ENCODE measurements at regions of chrX and their contacts with region 1.

Region 1: DNA sequence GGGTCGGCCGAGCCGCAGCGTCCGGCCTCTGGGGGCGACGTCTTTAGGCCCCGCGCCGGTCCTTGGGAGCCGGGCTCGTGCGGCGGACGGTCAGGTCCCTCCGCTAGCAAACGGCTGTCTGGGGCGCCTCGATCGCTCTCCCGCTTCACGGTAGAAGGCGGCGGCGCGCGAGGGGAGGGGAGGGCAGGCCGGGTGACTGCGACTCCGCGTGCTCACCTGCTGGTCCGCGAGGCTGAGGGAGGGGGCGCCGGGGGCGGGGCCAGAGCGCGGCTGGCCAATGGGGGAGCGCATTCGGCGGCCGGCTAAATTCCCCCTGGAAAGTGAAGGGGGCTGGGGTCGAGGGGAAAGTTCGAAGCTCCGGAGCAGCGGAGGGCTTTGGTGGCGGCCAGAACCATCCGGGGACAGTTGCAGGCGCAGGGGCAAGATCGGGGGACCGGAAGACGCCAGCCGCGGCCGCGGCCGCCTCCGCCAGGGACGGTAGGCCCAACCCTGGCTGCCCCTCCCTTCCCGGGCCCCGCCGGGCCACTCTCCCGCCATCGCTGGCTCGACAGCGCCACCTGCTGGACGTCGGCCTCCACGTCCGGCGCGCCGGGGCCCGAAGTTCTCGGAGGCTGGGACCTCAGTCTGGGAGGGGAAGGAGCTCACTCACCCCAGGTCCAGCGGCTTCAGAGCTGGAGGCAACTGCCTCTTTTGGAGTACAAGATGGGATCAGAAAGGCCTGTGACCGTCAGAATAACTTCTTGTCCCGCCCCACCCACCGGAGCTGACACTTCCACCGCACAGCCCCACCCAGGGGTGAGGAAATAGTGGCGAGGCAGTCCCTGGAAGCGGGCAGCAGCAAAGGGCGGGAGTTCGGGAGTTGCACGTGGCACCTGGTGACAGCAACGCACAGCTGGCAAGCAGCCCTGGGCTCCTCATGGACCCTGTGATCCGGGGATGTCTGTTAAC is 49.9 kb downstream of the ELF4 start:
- DNase-seq: peak; percentile 81
- ATAC-seq: peak; percentile 80
- H3K4me3 Mint-ChIP-seq: peak overlapping the region; percentile 59
- H3K27ac Mint-ChIP-seq: no peak overlapping the region
- H3K4me1 Mint-ChIP-seq: peaks cover 20% of the 10 kb centered on the region
- H3K27me3 Mint-ChIP-seq: peaks cover 41% of the 10 kb centered on the region
- CTCF ChIP-seq: peak; percentile 81

Region 2: GRCh38 chrX:129925305-129926092 is 134.9 kb before region 1 on chrX:
- CTCF ChIA-PET with region 1: interaction called, 23 read pairs
- POLR2A ChIA-PET with region 1: no interaction called
- DNase-seq: peak; percentile 66
- ATAC-seq: peak; percentile 73
- H3K4me3 Mint-ChIP-seq: no peak overlapping the region
- H3K27ac Mint-ChIP-seq: no peak overlapping the region
- H3K4me1 Mint-ChIP-seq: 0 out of 2 replicates have a peak, but pooled peaks cover under 1% of the 10 kb centered on the region
- H3K27me3 Mint-ChIP-seq: no peaks in the 10 kb centered on the region
- CTCF ChIP-seq: peak; percentile 54

Region 3: DNA sequence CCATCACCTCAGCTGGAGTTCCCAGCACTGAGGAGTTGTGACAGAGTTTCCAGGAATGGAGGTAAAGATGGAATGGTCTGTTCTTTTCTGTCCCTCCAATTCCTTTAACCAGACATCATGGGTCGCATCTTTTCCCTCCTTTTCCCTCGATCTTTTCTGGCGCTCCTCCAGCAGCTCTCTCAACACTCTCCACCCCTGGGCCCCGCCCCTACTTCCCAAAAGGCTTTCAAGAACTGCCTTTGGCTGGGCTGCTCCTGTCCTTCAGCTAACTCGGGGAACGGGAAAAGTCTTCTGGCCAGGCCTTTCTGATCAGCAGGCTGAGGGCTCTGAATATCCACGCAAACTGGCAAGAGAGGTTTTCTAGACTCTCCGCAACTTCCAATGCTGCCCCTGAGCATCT is 120.4 kb before region 1 on chrX:
- CTCF ChIA-PET with region 1: interaction called, 10 read pairs
- POLR2A ChIA-PET with region 1: no interaction called
- DNase-seq: no peak
- ATAC-seq: peak; percentile 68
- H3K4me3 Mint-ChIP-seq: no peak overlapping the region; the same call in 1 of the 2 replicates
- H3K27ac Mint-ChIP-seq: no peak overlapping the region
- H3K4me1 Mint-ChIP-seq: peaks cover 25% of the 10 kb centered on the region
- H3K27me3 Mint-ChIP-seq: peaks cover 66% of the 10 kb centered on the region
- CTCF ChIP-seq: no peak

Region 4: GRCh38 chrX:129957241-129958082 is 102.9 kb before region 1 on chrX:
- CTCF ChIA-PET with region 1: interaction called, 16 read pairs
- POLR2A ChIA-PET with region 1: no interaction called
- DNase-seq: peak; percentile 64
- ATAC-seq: peak; percentile 50
- H3K4me3 Mint-ChIP-seq: peak overlapping the region; percentile 66
- H3K27ac Mint-ChIP-seq: no peak overlapping the region
- H3K4me1 Mint-ChIP-seq: peaks cover 45% of the 10 kb centered on the region
- H3K27me3 Mint-ChIP-seq: peaks cover 93% of the 10 kb centered on the region
- CTCF ChIP-seq: no peak

Region 5: GRCh38 chrX:130024127-130024526 is 36.3 kb before region 1 on chrX:
- CTCF ChIA-PET with region 1: interaction called, 20 read pairs
- POLR2A ChIA-PET with region 1: interaction called, 3 read pairs
- DNase-seq: peak; percentile 84
- ATAC-seq: peak; percentile 97
- H3K4me3 Mint-ChIP-seq: peak overlapping the region; percentile 22; the same call in 1 of the 2 replicates
- H3K27ac Mint-ChIP-seq: no peak overlapping the region
- H3K4me1 Mint-ChIP-seq: peaks cover 12% of the 10 kb centered on the region
- H3K27me3 Mint-ChIP-seq: no peaks in the 10 kb centered on the region
- CTCF ChIP-seq: no peak

Region 6: DNA sequence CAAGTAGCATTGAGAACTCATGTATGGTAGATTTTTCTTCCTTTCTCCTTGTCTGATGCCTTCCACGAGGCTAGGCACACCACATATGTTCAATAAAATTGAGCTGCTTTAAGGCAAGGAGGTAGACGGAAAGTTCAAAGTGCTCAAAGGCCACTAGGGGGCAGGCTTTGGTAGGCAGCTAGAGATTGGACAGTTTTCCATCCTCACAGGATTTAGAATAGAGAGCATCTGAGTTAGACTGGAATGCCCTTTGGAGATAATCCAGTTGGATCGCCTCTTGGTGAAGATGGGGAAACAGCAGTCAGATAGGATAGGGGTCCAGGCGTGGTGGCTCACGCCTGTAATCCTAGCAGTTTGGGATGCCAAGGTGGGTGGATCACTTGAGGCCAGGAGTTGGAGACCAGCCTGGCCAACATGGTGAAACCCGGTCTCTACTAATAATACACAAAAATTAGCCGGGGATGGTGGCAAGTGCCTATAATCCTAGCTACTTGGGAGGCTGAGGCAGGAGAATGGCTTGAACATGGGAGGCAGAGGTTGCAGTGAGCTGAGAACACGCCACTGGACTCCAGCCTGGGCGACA is 19.5 kb after region 1 on chrX:
- CTCF ChIA-PET with region 1: interaction called, 14 read pairs
- POLR2A ChIA-PET with region 1: no interaction called
- DNase-seq: peak; percentile 52
- ATAC-seq: peak; percentile 65
- H3K4me3 Mint-ChIP-seq: no peak overlapping the region
- H3K27ac Mint-ChIP-seq: no peak overlapping the region
- H3K4me1 Mint-ChIP-seq: peaks cover 15% of the 10 kb centered on the region
- H3K27me3 Mint-ChIP-seq: no peaks in the 10 kb centered on the region
- CTCF ChIP-seq: peak; percentile 53

Region 7: DNA sequence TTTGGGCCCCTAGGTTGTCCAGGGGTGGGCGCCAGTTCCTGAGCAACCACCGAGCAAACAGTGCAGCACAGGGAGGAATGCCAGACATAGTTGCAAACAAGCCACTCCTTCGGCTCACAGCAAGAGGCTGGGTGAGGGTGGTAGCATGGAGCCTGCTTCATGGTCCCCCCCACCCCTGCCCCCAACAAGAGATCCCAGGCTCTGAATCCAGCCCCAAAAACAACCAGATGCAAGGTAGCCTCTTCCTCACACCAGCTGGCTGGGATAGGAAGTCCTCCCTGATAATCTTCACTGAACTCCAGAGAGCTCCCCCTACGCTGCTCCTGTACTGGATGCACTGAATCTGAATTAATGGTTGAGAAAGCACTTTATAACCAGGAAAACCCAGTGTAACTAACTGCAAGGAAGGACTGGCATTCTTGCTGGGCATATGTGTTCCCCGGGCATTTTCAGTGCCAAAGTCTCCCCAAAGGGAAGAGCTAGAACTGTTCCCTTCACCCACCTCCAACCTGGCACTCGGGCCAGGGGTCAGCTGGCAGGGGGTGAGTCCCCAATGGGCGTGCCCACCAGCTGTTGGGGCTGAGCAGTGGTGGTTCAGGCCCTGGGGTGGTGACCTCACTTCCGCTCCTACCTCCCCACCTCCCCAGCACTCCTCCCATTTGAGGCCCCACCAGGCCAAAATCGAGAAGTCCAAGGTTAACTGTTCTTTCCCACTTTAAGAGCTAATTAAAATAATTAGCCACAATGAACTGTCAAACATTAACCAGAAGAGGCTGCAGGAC is 48.4 kb after region 1 on chrX:
- CTCF ChIA-PET with region 1: interaction called, 12 read pairs
- POLR2A ChIA-PET with region 1: no interaction called
- DNase-seq: peak; percentile 14
- ATAC-seq: peak; percentile 46
- H3K4me3 Mint-ChIP-seq: peak overlapping the region; percentile 52; the same call in 1 of the 2 replicates
- H3K27ac Mint-ChIP-seq: no peak overlapping the region
- H3K4me1 Mint-ChIP-seq: peaks cover 20% of the 10 kb centered on the region
- H3K27me3 Mint-ChIP-seq: peaks cover 47% of the 10 kb centered on the region
- CTCF ChIP-seq: no peak